Mammary epithelial cell (primary cell): ENCODE measurements at regions of chr7 and their contacts with region 1.

Region 1: GRCh38 chr7:4973728-4974198 is 14.8 kb upstream of the MMD2 start:
- DNase-seq: peak; percentile 85
- H3K4me3 ChIP-seq: peak overlapping the region; percentile 82 to 97 (median 92)
- H3K27ac ChIP-seq: peak overlapping the region; percentile 57
- H3K4me1 ChIP-seq: no peaks in the 10 kb centered on the region
- H3K27me3 ChIP-seq: no peaks in the 10 kb centered on the region
- CTCF ChIP-seq: peak; percentile 43 to 83

Region 2: GRCh38 chr7:4849369-4849768 is 124.4 kb before region 1 on chr7:
- CTCF ChIA-PET with region 1: no interaction called
- dilution Hi-C with region 1: no loop called
- in situ Hi-C with region 1: no loop called
- intact Hi-C with region 1: loop called (anchors 5 kb)
- DNase-seq: peak; percentile 43
- H3K4me3 ChIP-seq: no peak overlapping the region
- H3K27ac ChIP-seq: no peak overlapping the region
- H3K4me1 ChIP-seq: no peaks in the 10 kb centered on the region
- H3K27me3 ChIP-seq: no peaks in the 10 kb centered on the region
- CTCF ChIP-seq: peak in 1 of 2 donors; percentile 55

Region 3: GRCh38 chr7:4996696-4997222 is 23.0 kb after region 1 on chr7:
- CTCF ChIA-PET with region 1: interaction called, 23 read pairs
- dilution Hi-C with region 1: no loop called
- in situ Hi-C with region 1: no loop called
- intact Hi-C with region 1: no loop called
- DNase-seq: no peak
- H3K4me3 ChIP-seq: no peak overlapping the region
- H3K27ac ChIP-seq: no peak overlapping the region
- H3K4me1 ChIP-seq: peaks cover 2% of the 10 kb centered on the region
- H3K27me3 ChIP-seq: no peaks in the 10 kb centered on the region
- CTCF ChIP-seq: no peak

Region 4: GRCh38 chr7:5045558-5046396 is 72.0 kb after region 1 on chr7 and contains the start of gene RBAK:
- CTCF ChIA-PET with region 1: no interaction called
- dilution Hi-C with region 1: no loop called
- in situ Hi-C with region 1: no loop called
- intact Hi-C with region 1: loop called (anchors 10 kb)
- DNase-seq: peak; percentile 88
- H3K4me3 ChIP-seq: peak within 1 kb of the TSS; percentile 62 to 77 (median 66)
- H3K27ac ChIP-seq: peak within 1 kb of the TSS; percentile 48
- H3K4me1 ChIP-seq: no peaks in the 10 kb centered on the region
- H3K27me3 ChIP-seq: no peaks in the 10 kb centered on the region
- CTCF ChIP-seq: no peak
- total RNA-seq, gene RBAK: 11.4 to 12.5 TPM

Region 5: DNA sequence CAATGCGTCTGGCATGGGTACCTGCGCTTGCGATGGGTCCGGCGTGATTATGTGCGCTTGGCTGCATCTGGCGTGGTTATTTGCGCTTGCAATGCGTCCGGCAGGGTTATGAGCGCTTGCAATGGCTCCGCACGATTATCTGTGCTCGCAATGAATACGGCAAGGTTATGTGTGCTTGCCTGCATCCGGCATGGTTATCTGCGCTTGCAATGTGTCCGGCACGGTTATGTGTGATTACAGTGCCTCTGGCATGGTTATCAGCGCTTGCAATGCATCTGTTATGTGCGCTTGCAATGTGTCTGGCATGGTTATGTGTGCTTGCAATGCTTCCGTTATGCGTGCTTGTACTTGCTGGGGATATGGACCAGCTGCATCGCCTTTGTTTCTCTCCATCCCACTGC is 109.5 kb after region 1 on chr7:
- CTCF ChIA-PET with region 1: interaction called, 3 read pairs
- dilution Hi-C with region 1: no loop called
- in situ Hi-C with region 1: no loop called
- intact Hi-C with region 1: loop called (anchors 1 kb)
- DNase-seq: no peak
- H3K4me3 ChIP-seq: no peak overlapping the region
- H3K27ac ChIP-seq: no peak overlapping the region
- H3K4me1 ChIP-seq: no peaks in the 10 kb centered on the region
- H3K27me3 ChIP-seq: no peaks in the 10 kb centered on the region
- CTCF ChIP-seq: no peak

Region 6: DNA sequence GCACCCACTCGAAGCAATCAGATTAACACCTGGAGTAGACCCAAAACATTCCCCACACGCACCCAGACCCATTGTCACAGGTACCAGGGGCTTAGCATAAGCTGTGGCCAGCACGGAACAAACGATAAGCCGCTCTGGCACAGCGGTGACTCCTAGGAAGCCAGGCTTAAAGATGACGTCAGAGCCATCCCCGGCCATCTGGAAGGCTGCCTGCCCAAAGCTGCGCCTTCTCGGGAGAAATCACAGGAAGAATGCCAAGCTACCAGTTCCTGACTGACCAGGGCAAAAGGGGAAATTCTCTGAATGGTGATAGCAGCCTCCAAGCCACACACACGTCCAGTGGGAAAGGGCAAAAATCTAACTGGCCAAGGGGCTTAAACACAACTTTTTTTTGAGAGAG is 203.3 kb after region 1 on chr7:
- CTCF ChIA-PET with region 1: no interaction called
- dilution Hi-C with region 1: no loop called
- in situ Hi-C with region 1: loop called in 1 of 2 experiments (anchors 10 kb)
- intact Hi-C with region 1: loop called (anchors 1 kb)
- DNase-seq: peak; percentile 49
- H3K4me3 ChIP-seq: no peak overlapping the region
- H3K27ac ChIP-seq: no peak overlapping the region
- H3K4me1 ChIP-seq: no peaks in the 10 kb centered on the region
- H3K27me3 ChIP-seq: no peaks in the 10 kb centered on the region
- CTCF ChIP-seq: no peak